MCF 10A (cell line): ENCODE measurements at regions of chr3 and their contacts with region 1.

Region 1: DNA sequence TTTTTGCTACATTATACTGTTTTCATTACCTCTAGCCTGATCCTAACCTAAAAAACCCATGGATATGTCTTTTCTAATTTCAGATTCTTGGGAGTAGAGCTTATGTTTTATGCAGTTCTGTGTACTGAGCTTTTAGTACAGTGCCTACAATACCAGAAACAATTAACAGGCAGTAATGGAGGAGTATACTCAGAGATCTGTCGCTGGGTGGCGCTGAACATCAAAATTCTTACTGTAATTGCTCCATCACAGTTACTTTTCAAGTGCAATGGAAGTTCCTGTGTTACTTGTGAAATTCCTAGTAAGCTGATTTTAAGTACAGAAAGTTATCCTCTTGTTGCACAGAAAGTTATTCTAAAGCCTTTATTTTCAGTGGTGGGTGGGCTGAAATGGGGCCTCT is 66.9 kb downstream of the RNF13 start:
- DNase-seq: peak; percentile 67
- H3K4me3 Mint-ChIP-seq: no peak overlapping the region
- H3K27ac Mint-ChIP-seq: no peak overlapping the region
- H3K4me1 Mint-ChIP-seq: no peaks in the 10 kb centered on the region
- H3K27me3 Mint-ChIP-seq: no peaks in the 10 kb centered on the region
- CTCF ChIP-seq: peak; percentile 48

Region 2: GRCh38 chr3:149494022-149494758 is 385.7 kb before region 1 on chr3:
- CTCF ChIA-PET with region 1: no interaction called
- POLR2A ChIA-PET with region 1: no interaction called
- intact Hi-C with region 1: loop called (anchors 10 kb)
- DNase-seq: peak; percentile 73
- H3K4me3 Mint-ChIP-seq: no peak overlapping the region
- H3K27ac Mint-ChIP-seq: no peak overlapping the region
- H3K4me1 Mint-ChIP-seq: no peaks in the 10 kb centered on the region
- H3K27me3 Mint-ChIP-seq: peaks cover 15% of the 10 kb centered on the region
- CTCF ChIP-seq: peak; percentile 77

Region 3: DNA sequence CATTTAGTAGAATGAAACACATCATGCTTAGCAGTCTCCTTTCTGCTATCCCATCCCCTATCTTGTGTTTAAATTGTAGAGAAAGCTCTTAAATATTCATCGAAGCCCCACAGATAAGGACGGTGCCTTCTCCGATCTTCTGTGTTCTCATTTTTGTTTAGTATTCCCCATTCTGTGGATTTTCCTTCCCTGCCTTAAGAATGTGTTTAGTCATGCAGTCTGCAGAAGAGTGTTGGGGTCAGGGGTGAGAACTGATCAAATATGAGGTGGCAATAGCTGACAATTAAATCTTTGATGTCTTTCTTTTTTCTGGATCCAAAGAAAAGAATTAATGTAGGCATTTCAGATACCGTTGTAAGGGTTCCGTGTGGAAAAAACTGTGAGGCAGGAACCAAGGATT is 78.2 kb before region 1 on chr3:
- CTCF ChIA-PET with region 1: no interaction called
- POLR2A ChIA-PET with region 1: no interaction called
- intact Hi-C with region 1: no loop called
- DNase-seq: no peak
- H3K4me3 Mint-ChIP-seq: no peak overlapping the region
- H3K27ac Mint-ChIP-seq: no peak overlapping the region
- H3K4me1 Mint-ChIP-seq: no peaks in the 10 kb centered on the region
- H3K27me3 Mint-ChIP-seq: no peaks in the 10 kb centered on the region
- CTCF ChIP-seq: no peak

Region 4: GRCh38 chr3:150005243-150006112 is 125.6 kb after region 1 on chr3:
- CTCF ChIA-PET with region 1: no interaction called
- POLR2A ChIA-PET with region 1: no interaction called
- intact Hi-C with region 1: no loop called
- DNase-seq: no peak
- H3K4me3 Mint-ChIP-seq: no peak overlapping the region
- H3K27ac Mint-ChIP-seq: no peak overlapping the region
- H3K4me1 Mint-ChIP-seq: peaks cover 11% of the 10 kb centered on the region
- H3K27me3 Mint-ChIP-seq: no peaks in the 10 kb centered on the region
- CTCF ChIP-seq: no peak